ENCODE measurements at regions of chr1 and their contacts with region 1.

Region 1: DNA sequence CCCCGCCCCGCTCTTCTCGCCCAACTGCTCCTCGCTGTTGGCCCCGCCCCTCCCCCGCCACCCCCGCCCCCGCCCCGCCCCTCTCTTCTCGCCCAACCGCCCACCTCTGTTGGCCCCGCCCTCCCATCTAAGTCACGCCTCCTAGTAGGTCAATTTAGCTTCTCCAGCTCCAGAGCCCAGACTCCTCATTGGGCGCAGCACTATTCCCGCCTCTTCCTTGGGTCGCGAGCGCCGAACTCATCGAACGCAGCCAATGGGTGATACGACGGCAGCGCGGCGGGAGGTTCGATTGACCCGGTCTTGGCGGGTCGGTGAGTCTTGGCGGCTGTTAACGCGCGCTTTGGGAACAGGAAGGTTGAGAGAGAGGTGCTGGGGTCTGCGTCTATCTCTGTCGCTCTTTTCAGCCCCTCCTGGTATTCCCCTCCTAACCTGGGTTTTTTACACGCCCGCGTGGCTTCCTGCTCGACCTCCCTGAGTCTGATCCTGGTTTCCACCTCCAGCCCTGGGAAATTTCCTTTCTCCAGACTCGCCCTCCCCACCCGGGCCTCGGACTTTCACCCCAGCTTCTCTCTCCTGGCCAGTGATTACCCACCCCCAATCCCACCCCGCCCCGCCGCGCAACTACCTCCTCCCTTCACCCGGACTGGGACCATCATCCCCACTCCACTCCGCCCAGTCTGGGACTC is at the start of gene RAD54L:
- DNase-seq: peak; percentile 95 to 99
- H3K4me3 ChIP-seq: peak within 1 kb of the TSS; percentile 72
- H3K27ac ChIP-seq: peak within 1 kb of the TSS; percentile 60
- H3K4me1 ChIP-seq: peaks cover 21% of the 10 kb centered on the region
- H3K27me3 ChIP-seq: no peaks in the 10 kb centered on the region
- CTCF ChIP-seq: no peak
- total RNA-seq, gene RAD54L: 44.8 and 56.4 TPM in 2 replicates

Region 2: DNA sequence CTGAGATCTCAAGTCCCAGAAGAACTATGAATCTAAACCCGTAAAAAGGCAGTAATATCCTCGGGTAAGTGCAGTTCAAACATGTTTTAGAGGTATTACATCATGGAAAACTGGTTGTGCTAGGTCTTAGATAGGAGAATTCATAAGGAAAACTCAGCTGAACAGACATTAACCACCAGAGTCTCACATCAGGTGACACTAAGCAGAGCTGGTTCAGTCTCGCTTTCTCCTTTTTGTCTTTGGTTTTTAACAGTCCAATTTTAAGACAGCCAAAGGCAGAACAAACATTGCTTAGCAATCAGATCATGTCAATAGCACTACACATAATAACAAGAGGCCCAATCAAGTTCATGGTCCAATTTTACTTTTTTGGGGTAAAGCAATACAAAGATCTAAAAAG is 844.3 kb before region 1 on chr1:
- CTCF ChIA-PET with region 1: no interaction called
- POLR2A ChIA-PET with region 1: interaction called, 16 read pairs
- intact Hi-C with region 1: no loop called
- DNase-seq: no peak
- H3K4me3 ChIP-seq: no peak overlapping the region
- H3K27ac ChIP-seq: no peak overlapping the region
- H3K4me1 ChIP-seq: peaks cover 24% of the 10 kb centered on the region
- H3K27me3 ChIP-seq: no peaks in the 10 kb centered on the region
- CTCF ChIP-seq: no peak

Region 3: GRCh38 chr1:46030876-46031660 is 216.5 kb before region 1 on chr1:
- CTCF ChIA-PET with region 1: no interaction called
- POLR2A ChIA-PET with region 1: interaction called, 13 read pairs
- intact Hi-C with region 1: no loop called
- DNase-seq: no peak
- H3K4me3 ChIP-seq: no peak overlapping the region
- H3K27ac ChIP-seq: no peak overlapping the region
- H3K4me1 ChIP-seq: no peaks in the 10 kb centered on the region
- H3K27me3 ChIP-seq: no peaks in the 10 kb centered on the region
- CTCF ChIP-seq: no peak

Region 4: GRCh38 chr1:46203738-46204405 is 43.7 kb before region 1 on chr1:
- CTCF ChIA-PET with region 1: no interaction called
- POLR2A ChIA-PET with region 1: interaction called, 19 read pairs
- intact Hi-C with region 1: no loop called
- DNase-seq: no peak
- H3K4me3 ChIP-seq: no peak overlapping the region
- H3K27ac ChIP-seq: no peak overlapping the region
- H3K4me1 ChIP-seq: peaks cover 6% of the 10 kb centered on the region; the same call in 1 of the 2 replicates
- H3K27me3 ChIP-seq: no peaks in the 10 kb centered on the region
- CTCF ChIP-seq: no peak

Region 5: GRCh38 chr1:46223472-46223943 is 24.1 kb before region 1 on chr1:
- CTCF ChIA-PET with region 1: interaction called, 26 read pairs
- POLR2A ChIA-PET with region 1: no interaction called
- intact Hi-C with region 1: no loop called
- DNase-seq: peak; percentile 81 to 87
- H3K4me3 ChIP-seq: no peak overlapping the region
- H3K27ac ChIP-seq: no peak overlapping the region
- H3K4me1 ChIP-seq: peaks cover 5% of the 10 kb centered on the region
- H3K27me3 ChIP-seq: no peaks in the 10 kb centered on the region
- CTCF ChIP-seq: peak; percentile 97

Region 6: DNA sequence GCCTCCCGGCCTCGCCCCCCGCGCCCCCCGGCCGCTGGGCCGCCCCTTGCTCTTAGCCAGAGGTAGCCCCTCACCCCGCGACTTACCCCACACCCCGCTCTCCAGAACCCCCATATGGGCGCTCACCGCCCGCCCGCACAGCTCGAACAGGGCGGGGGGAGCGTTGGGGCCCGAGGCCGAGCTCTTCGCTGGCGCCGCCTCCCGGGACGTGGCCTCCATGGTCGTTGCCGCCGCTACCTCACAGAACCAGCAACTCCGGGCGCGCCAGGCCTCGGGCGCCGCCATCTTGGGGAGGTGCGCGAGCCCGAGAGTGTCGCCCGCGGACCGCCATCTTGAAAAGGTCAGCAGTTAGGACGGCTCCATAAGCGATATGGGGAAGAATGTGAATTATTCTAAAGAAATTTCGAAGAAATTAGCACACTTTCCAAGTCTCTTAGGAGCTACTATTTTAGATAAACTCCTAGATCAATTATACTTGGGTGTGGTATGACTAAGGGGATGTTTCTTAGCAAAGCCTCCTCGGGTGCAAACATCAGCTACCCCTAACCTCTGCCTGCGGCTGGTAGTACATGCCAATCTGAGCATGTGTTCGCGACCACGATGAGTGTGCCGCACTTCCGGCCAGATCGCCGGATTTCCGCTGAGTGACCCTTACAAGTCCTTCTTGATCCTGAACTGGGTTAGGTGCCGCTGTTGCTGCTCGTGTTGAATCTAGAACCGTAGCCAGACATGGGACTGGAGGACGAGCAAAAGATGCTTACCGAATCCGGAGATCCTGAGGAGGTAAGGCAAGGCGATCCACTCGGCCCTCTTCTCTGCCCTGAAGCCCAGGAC is 55.7 kb after region 1 on chr1 and contains the starts of genes LRRC41 and UQCRH:
- CTCF ChIA-PET with region 1: no interaction called
- POLR2A ChIA-PET with region 1: interaction called, 31 read pairs
- intact Hi-C with region 1: loop called (anchors 2 kb)
- DNase-seq: peak; percentile 94 to 95
- H3K4me3 ChIP-seq: peak within 1 kb of the TSS; percentile 95
- H3K27ac ChIP-seq: peak within 1 kb of the TSS; percentile 87
- H3K4me1 ChIP-seq: peaks cover 35% of the 10 kb centered on the region
- H3K27me3 ChIP-seq: no peaks in the 10 kb centered on the region
- CTCF ChIP-seq: 0 out of 2 replicates have a peak, but pooled peaks have one; percentile 12
- total RNA-seq, gene LRRC41: 65.9 and 66.3 TPM in 2 replicates
- total RNA-seq, gene UQCRH: 457 and 551 TPM in 2 replicates

Region 7: GRCh38 chr1:46340404-46341221 is 93.0 kb after region 1 on chr1 and contains the start of gene NSUN4:
- CTCF ChIA-PET with region 1: no interaction called
- POLR2A ChIA-PET with region 1: no interaction called
- intact Hi-C with region 1: loop called (anchors 1 kb)
- DNase-seq: peak; percentile 84 to 88
- H3K4me3 ChIP-seq: peak within 1 kb of the TSS; percentile 96
- H3K27ac ChIP-seq: peak within 1 kb of the TSS; percentile 90
- H3K4me1 ChIP-seq: peaks cover 20% of the 10 kb centered on the region; the same call in 1 of the 2 replicates
- H3K27me3 ChIP-seq: no peaks in the 10 kb centered on the region
- CTCF ChIP-seq: peak; percentile 68
- total RNA-seq, gene NSUN4: 31.7 and 33.9 TPM in 2 replicates